ENCODE measurements at regions of chr20 and their contacts with region 1.

Region 1: DNA sequence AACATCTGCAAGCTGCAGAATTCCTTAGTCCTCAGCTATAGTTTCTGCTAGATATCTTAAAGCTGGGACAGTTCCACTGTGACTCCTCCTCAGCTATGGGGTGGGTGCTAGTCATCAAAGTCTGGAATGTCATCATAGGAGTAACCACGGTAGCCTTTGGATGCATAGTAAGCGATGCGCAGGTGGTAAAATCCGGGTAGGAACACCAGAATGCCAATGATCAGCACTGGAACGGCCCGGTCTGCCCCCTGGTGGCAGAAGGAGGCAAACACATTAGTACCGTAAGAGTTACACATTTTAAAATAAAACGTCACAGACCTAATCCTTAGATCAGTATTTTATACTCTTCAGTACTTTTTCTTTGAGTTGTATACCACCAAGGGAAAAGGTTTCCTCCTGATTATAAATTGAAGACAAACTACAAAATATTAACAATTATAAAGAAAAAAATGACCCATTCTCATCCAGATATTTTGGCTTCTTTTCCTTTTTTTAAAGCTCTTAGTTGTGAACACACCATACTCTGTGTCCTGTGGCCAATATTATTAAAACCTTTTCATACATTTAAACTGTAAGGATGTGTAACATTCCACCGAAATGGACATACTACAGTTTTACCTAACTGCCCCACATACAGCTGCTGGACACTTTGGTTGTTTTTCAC is 18.9 kb downstream of the PCNA start:
- DNase-seq: peak; percentile 78
- ATAC-seq: peak; percentile 81
- H3K4me3 Mint-ChIP-seq: no peak overlapping the region
- H3K27ac Mint-ChIP-seq: peak overlapping the region; percentile 62
- H3K4me1 Mint-ChIP-seq: peaks cover 10% of the 10 kb centered on the region
- H3K27me3 Mint-ChIP-seq: no peaks in the 10 kb centered on the region

Region 2: DNA sequence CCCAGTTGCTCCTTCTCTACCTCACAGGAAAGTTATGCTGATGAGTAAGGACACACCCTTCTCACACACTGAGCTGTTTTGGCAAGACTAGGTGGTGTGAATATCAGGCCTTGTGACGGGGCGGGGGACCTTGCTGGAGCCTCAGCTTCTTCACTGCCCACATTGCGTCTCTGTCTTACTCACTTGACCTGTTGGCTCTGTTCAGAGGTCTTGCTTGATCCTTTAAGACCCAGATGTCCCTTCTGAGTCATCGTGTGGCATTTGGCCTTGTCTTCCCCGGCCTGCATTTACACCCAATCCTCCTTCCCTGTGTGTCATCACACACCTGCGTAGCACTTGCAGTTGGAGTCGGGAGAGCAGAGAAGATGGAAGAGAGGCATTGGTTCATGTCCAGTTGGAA is 387.4 kb before region 1 on chr20:
- CTCF ChIA-PET with region 1: no interaction called
- DNase-seq: peak; percentile 33
- ATAC-seq: no peak
- H3K4me3 Mint-ChIP-seq: no peak overlapping the region
- H3K27ac Mint-ChIP-seq: no peak overlapping the region
- H3K4me1 Mint-ChIP-seq: peaks cover 11% of the 10 kb centered on the region
- H3K27me3 Mint-ChIP-seq: peaks cover 8% of the 10 kb centered on the region

Region 3: GRCh38 chr20:4961746-4962145 is 139.1 kb before region 1 on chr20:
- CTCF ChIA-PET with region 1: interaction called, 16 read pairs
- DNase-seq: peak; percentile 53
- ATAC-seq: peak; percentile 82
- H3K4me3 Mint-ChIP-seq: peak overlapping the region; percentile 20
- H3K27ac Mint-ChIP-seq: peak overlapping the region; percentile 82
- H3K4me1 Mint-ChIP-seq: peaks cover 20% of the 10 kb centered on the region
- H3K27me3 Mint-ChIP-seq: no peaks in the 10 kb centered on the region

Region 4: DNA sequence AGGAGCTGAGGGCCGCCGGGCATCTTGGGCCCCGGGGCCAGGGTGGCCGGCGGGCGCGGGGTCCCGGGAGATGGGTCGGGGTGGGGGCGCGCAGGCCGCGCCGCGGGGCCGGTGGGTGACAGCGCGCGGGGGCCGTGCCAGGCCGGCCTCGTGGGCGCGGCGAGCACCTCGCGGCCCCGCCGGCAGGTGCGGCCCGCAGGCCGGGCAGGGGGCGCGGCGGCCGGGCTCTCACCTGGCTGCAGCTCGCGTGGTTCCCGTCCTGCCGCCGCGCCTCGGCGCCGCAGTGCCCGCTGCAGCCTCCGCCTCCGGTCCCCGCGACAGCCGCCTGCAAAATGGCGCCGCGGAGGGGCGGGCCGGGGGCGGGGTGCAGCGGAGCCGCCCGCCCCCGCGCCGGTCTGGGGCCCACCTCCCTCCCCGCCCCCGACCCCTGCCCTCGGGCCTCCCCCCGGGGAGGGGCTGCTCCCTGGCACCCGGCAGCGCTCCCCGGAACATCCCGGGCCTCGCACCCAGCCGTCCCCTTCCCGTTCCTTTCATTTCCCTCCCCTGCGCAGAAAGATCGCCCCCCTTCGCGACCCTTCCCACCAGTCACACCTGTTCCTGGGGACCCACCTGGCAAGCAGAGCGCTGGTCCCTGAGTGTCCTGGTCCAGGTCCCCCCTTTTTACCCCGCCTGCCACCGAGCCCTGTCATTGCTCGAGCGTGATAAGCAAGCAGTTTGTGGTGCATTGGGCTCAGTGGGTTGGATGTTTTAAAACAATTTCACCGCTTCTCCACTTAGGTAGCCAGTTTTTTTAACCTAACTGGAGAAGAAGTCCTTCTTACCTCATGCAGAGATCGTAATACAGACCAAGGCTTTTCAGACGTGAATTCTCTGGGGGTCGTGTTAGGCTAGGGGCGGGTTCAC is 99.4 kb before region 1 on chr20 and contains the start of gene SLC23A2:
- CTCF ChIA-PET with region 1: interaction called, 18 read pairs
- DNase-seq: peak; percentile 60
- ATAC-seq: peak; percentile 90
- H3K4me3 Mint-ChIP-seq: peak within 1 kb of the TSS; percentile 82
- H3K27ac Mint-ChIP-seq: peak within 1 kb of the TSS; percentile 82
- H3K4me1 Mint-ChIP-seq: peaks cover 24% of the 10 kb centered on the region
- H3K27me3 Mint-ChIP-seq: peaks cover 8% of the 10 kb centered on the region
- total RNA-seq, gene SLC23A2: 16.1 to 16.5 TPM

Region 5: DNA sequence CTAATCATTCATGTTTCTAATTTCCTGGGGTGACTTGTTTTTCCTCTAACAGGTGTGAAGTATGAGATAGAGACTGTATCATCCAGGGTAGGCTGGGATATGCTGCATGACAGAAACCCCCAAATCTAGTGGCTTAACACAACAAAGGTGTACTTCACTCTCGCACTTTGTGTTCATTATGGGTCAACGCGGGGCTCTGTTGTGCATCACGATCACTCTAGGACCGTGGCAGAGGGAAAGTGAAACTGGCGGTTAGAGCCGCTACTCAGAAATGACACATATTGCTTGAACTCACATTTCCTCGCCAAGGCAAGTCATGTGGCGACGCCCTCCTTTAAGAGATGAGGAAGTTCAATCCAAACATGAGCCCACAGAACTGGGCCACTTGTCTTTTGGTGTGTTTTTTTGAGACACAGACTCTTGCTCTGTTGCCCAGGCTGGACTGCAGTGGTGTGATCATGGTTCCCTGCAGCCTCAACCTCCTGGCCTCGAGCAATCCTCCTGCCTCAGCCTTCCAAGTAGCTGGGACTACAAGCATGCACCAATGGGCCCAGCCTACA is 22.3 kb before region 1 on chr20:
- CTCF ChIA-PET with region 1: interaction called, 13 read pairs
- DNase-seq: peak; percentile 95
- ATAC-seq: peak; percentile 97
- H3K4me3 Mint-ChIP-seq: peak overlapping the region; percentile 70
- H3K27ac Mint-ChIP-seq: peak overlapping the region; percentile 99
- H3K4me1 Mint-ChIP-seq: peaks cover 56% of the 10 kb centered on the region
- H3K27me3 Mint-ChIP-seq: no peaks in the 10 kb centered on the region

Region 6: DNA sequence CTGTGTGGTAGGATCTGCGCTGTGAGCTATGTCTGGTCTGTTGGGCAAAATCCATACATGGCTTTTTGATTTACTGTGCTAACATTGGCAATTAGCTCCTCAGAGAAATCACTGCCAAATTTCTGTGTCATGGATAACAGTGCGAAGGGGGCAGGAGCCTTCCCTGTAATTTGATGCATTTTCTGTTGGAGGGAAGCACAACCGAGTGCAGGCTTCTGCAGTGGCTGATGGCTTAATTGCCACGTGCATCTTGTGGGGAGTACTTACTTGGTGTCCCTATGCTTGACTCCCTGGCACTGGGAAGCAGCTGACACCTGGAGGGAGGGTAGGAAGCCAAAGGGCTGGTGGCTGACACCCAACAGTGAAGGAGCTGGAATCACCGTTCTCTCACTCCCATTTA is 315.3 kb after region 1 on chr20:
- CTCF ChIA-PET with region 1: no interaction called
- DNase-seq: no peak
- ATAC-seq: no peak
- H3K4me3 Mint-ChIP-seq: no peak overlapping the region
- H3K27ac Mint-ChIP-seq: no peak overlapping the region
- H3K4me1 Mint-ChIP-seq: no peaks in the 10 kb centered on the region
- H3K27me3 Mint-ChIP-seq: peaks cover 5% of the 10 kb centered on the region

Measured in activated CD8-positive, alpha-beta memory T cell treated with anti-CD3 and anti-CD28 coated beads, Interleukin-2, amount 10 ng/mL, durations not matched to agents 7 days and 5 days (primary cell).